ENCODE measurements at regions of chr11 and their contacts with region 1.

Region 1: GRCh38 chr11:96314326-96315020 is 28.5 kb downstream of the MAML2 start:
- DNase-seq: peak; percentile 69 to 100
- H3K4me3 ChIP-seq: peak overlapping the region; percentile 41
- H3K27ac ChIP-seq: peak overlapping the region; percentile 96
- H3K4me1 ChIP-seq: peaks cover 100% of the 10 kb centered on the region
- H3K27me3 ChIP-seq: no peaks in the 10 kb centered on the region
- CTCF ChIP-seq: no peak

Region 2: GRCh38 chr11:95943546-95943945 is 370.9 kb before region 1 on chr11:
- CTCF ChIA-PET with region 1: no interaction called
- POLR2A ChIA-PET with region 1: no interaction called
- intact Hi-C with region 1: no loop called
- DNase-seq: no peak
- H3K4me3 ChIP-seq: no peak overlapping the region
- H3K27ac ChIP-seq: no peak overlapping the region
- H3K4me1 ChIP-seq: no peaks in the 10 kb centered on the region
- H3K27me3 ChIP-seq: no peaks in the 10 kb centered on the region
- CTCF ChIP-seq: no peak

Region 3: DNA sequence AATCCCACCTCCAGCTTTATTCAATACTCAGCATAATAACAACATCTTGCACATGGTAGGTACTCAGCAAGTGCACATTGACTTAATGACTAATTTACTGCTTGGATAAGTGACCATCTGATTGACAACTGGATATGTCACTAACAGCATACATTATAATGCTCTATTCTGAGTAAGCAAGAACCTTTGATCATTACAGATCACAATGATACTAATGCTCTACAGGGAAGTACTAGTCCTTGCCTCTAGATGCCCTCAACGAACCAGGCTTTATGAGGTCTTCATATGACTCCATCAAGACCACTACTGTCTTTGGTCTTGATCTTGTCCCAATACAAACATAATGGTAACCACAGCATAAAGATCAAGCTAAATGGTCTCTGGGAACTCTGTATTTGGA is 223.0 kb before region 1 on chr11:
- CTCF ChIA-PET with region 1: no interaction called
- POLR2A ChIA-PET with region 1: no interaction called
- intact Hi-C with region 1: loop called (anchors 2 kb)
- DNase-seq: peak in 1 of 2 experiments; percentile 39
- H3K4me3 ChIP-seq: no peak overlapping the region
- H3K27ac ChIP-seq: no peak overlapping the region
- H3K4me1 ChIP-seq: peaks cover 42% of the 10 kb centered on the region
- H3K27me3 ChIP-seq: no peaks in the 10 kb centered on the region
- CTCF ChIP-seq: no peak